Activated CD8-positive, alpha-beta memory T cell treated with anti-CD3 and anti-CD28 coated beads, Interleukin-2, amount 10 ng/mL, durations not matched to agents 7 days and 5 days (primary cell): ENCODE measurements at regions of chr1 and their contacts with region 1.

Region 1: GRCh38 chr1:41902125-41902524 is 16.6 kb downstream of the HIVEP3 start:
- DNase-seq: peak; percentile 39
- ATAC-seq: no peak
- H3K4me3 Mint-ChIP-seq: peak overlapping the region; percentile 46
- H3K27ac Mint-ChIP-seq: peak overlapping the region; percentile 88
- H3K4me1 Mint-ChIP-seq: peaks cover 73% of the 10 kb centered on the region
- H3K27me3 Mint-ChIP-seq: no peaks in the 10 kb centered on the region

Region 2: GRCh38 chr1:41919764-41920397 is 17.8 kb after region 1 on chr1:
- CTCF ChIA-PET with region 1: interaction called, 12 read pairs
- DNase-seq: peak; percentile 95
- ATAC-seq: peak; percentile 91
- H3K4me3 Mint-ChIP-seq: peak overlapping the region; percentile 98
- H3K27ac Mint-ChIP-seq: peak overlapping the region; percentile 98
- H3K4me1 Mint-ChIP-seq: peaks cover 58% of the 10 kb centered on the region
- H3K27me3 Mint-ChIP-seq: no peaks in the 10 kb centered on the region